Vagina (tissue), 2 donors: ENCODE measurements at regions of chr19 and their contacts with region 1.

Region 1: DNA sequence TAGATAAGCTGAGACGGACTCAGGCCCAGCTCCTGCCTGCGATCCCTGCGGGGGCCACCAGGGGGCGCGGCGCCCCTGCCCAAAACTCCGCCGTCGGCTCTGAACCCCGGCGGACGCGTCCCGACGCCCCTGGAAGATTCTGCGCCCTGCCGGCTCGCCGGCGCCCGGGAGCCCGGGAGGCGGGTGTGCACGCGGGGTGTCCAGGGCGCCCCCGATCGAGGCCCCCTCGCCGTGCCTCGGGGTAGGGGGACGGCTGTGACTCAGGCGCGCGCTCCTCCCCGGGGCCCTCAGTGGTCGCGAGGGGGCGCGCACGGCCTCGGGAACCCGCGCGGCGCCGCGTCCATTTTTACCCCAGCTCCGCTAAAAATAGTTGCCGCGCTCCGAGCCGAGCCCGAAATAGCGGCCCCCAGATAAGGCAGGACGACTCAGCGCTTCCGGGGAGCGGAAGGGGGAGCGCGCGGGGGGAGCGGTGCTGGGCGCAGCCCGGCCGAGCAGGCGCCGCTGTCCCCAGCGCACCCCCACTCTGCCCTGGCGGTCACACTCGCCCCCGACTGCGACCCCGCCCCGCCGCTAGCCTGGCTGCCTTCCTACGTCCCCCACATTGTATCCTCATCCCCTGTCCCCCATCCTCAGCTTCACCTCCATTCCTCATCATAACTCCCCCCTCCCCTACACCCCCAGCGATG is 16.0 kb upstream of the ERCC1 start:
- DNase-seq: no peak
- H3K4me3 ChIP-seq: peak overlapping the region; percentile 61 to 81
- H3K27ac ChIP-seq: peak overlapping the region; percentile 98
- H3K4me1 ChIP-seq: peaks cover 22% of the 10 kb centered on the region
- H3K27me3 ChIP-seq: no peaks in the 10 kb centered on the region
- CTCF ChIP-seq: peak; percentile 99 to 100 (median 100)
- POLR2A ChIP-seq: no peak

Region 2: DNA sequence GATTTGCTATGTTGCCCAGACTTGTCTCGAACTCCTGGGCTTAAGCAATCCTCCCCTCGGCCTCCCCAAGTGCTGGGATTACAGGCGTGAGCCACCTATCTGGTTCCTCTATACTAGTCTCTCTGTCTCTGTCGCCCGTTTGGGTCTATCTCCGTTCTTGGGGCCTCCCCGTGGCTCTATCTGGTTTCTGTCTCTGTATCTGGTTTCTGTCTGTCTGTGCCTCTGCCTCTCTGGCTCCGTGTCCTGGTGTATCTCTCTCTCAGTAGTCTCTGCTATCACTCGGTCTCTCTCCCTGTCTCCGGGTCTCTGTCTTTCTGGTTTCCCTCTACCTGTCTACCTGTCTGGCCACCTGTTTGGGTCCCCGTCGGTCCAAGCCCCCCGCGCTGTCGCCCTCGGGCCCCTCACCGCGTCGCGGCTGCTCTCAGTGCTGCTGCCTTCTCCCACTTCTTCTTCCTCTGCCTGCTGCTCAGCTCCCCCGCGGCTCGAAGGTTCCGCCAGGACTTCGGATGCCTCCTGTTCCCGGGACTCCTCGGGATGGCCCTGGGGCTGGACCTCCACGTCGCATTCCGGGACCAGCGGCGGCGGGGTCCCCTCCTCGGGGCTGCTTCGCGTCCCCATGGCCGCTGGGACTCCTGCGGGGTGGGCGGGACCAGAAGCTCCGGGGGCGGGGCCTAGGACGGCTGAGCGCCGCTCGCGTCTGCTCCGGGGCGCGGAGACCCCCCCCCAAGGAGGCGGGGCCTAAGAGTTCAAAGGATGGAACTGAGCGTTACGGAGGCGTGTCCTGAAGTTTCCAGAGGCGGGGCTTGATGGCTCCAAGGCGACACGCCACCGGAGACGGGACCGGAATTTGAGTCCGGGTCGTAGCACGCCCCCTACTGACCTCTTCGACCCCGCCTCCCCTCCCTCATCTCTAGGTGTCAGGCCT is 1935.9 kb before region 1 on chr19:
- intact Hi-C with region 1: no loop called
- DNase-seq: peak in 1 of 2 donors; percentile 95
- H3K4me3 ChIP-seq: peak overlapping the region; percentile 81 to 87
- H3K27ac ChIP-seq: peak overlapping the region; percentile 91
- H3K4me1 ChIP-seq: peaks cover 39% of the 10 kb centered on the region
- H3K27me3 ChIP-seq: no peaks in the 10 kb centered on the region
- CTCF ChIP-seq: peak in 1 of 3 experiments; percentile 48
- POLR2A ChIP-seq: peak in 1 of 2 donors; percentile 32

Region 3: DNA sequence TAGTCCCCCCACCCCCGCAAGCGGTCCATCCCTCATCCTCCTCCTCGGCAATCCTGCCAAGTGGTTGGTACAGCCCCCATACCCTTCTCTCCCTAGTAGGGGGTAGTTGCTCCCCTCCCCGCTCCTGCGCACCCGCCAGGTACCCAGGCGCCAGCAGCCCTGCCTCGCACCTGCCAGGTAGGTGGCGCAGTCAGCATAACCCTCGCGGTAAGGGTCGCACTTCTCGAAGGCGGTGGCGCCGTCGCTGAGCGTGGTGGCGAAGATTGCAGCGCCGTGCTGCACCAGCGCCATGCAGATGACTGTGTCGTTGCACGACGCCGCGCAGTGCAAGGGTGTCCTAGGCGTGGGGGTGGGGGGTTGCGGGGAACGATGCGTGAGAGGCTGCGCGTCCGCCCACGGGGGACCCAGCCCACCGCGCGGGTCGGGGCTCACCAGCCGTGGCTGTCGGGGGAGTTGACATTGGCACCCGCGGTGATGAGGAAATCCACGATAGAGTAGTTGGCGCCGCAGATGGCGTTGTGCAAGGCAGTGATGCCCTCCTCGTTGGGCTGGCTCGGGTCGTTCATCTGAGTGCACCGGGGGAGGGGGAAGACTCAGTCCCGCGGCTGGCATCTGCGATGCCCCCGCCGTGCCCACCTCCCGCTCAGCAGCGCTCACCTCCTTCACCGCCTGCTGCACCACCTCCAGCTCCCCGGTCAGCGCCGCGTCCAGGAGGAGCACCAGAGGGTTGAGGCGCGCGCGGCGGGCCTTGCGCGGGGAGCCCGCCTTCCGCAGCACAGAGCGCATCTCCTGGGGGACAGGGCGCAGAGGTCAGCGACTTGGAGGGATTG is 54.1 kb before region 1 on chr19:
- intact Hi-C with region 1: no loop called
- DNase-seq: no peak
- H3K4me3 ChIP-seq: no peak overlapping the region
- H3K27ac ChIP-seq: no peak overlapping the region
- H3K4me1 ChIP-seq: peaks cover 10% of the 10 kb centered on the region
- H3K27me3 ChIP-seq: peaks cover 17% of the 10 kb centered on the region
- CTCF ChIP-seq: no peak
- POLR2A ChIP-seq: no peak

Region 4: GRCh38 chr19:45478454-45479238 is 38.9 kb after region 1 on chr19:
- intact Hi-C with region 1: loop called (anchors 2 kb)
- DNase-seq: no peak
- H3K4me3 ChIP-seq: peak overlapping the region; percentile 45 to 46
- H3K27ac ChIP-seq: peak overlapping the region; percentile 97
- H3K4me1 ChIP-seq: peaks cover 8% of the 10 kb centered on the region
- H3K27me3 ChIP-seq: no peaks in the 10 kb centered on the region
- CTCF ChIP-seq: peak; percentile 91 to 99 (median 97)
- POLR2A ChIP-seq: no peak